ENCODE measurements at regions of chr2 and their contacts with region 1.

Region 1: DNA sequence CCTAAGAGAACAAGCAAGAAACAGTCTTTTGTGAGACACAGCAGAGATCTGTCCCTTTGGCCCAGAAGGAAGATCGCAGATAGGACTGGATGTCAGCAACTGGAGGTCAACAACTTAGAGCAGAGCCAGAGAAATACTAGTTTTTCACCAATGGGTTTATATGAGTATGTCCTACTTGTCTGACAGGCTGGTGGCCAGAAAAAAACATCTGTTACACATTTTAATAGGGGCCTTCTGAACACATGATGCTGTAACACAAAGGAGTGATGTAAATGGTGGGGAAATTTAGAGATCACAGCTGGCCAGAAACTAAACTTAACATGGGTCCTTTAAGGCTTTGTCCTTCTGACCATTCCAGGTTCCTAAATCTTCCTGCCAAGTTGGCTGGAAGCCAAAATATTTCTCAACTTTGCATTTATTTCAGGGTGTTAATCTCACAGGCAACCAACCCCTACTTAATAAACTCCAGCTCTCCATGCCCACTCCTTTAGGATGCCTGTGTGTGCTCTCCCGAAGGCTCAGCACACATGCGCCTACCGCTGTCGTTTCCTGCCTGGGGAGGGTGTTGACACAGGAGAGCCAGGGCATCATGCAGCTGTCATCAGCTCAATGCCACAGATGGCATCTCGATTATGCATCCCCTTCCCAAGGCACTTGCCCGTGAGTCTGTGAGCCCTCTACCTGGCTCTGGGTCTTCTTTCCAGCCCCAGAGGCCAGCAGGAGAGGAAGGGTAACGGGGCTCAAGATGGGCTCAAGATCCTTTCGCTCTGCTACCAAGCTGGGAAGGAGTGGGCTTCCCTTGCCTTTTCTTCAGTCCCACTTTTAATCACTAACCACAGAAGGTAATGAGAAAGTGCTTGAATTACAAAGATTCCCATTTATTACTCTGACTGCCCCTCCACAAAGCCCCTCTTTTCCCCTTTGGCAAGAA is 252.5 kb downstream of the ETAA1 start:
- DNase-seq: peak; percentile 49 to 77
- H3K4me3 ChIP-seq: no peak overlapping the region
- H3K27ac ChIP-seq: peak overlapping the region; percentile 69 to 72
- H3K4me1 ChIP-seq: peaks cover 0 to 5% of the 10 kb centered on the region in 2 donors
- H3K27me3 ChIP-seq: no peaks in the 10 kb centered on the region
- CTCF ChIP-seq: no peak
- POLR2A ChIP-seq: no peak

Region 2: DNA sequence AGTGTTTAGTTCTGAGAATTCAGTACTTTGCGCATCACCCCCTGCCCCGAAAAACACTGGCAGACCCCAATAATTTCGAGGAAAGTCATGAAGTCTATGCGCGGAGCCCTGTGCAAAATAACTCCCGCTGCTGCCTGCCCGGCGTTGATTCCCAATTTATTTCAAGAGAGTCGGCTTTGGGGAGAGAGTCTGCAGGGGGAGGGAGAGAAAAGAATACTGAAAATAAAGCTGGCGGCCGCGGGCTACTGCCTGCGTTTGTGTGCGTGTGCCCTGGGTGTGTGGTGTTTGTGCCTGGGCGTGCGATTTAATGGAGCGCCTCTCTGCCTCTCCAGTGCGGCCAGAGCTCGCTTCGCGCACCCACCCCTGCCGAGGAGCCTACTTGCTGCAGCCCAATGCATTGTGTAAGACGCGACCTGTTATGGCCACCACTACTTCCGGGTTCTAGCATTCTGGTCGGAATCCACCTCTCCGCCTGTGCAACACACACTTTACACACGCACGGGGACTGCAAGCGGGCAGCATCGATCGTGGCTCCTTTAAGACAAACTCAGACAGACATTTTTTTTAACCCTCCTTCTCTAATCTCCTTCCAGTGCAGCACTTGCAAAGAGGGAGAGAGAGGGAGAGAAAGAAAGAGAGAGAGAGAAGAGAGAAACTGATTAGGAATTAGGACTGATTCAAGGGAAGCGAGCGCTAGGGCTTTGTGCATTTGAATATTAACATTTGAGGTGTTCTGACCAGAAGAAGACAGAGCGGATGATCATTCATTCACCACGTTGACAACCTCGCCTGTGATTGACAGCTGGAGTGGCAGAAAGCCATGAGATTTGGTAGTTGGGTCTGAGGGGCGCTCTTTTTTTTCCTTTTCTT is 1214.7 kb before region 1 on chr2 and contains the start of gene MEIS1:
- intact Hi-C with region 1: loop called (anchors 10 kb)
- DNase-seq: peak; percentile 95 to 98
- H3K4me3 ChIP-seq: peak within 1 kb of the TSS; percentile 80 to 97
- H3K27ac ChIP-seq: peak within 1 kb of the TSS; percentile 96 to 100
- H3K4me1 ChIP-seq: no peaks in the 10 kb centered on the region
- H3K27me3 ChIP-seq: no peaks in the 10 kb centered on the region
- CTCF ChIP-seq: peak in 1 of 4 experiments; percentile 10
- POLR2A ChIP-seq: peak; percentile 92 to 97
- total RNA-seq, gene MEIS1: 110 to 418 (median 233) TPM

Measured in uterus (tissue), 4 donors.